Breast epithelium (tissue), 4 donors: ENCODE measurements at regions of chr6 and their contacts with region 1.

Region 1: DNA sequence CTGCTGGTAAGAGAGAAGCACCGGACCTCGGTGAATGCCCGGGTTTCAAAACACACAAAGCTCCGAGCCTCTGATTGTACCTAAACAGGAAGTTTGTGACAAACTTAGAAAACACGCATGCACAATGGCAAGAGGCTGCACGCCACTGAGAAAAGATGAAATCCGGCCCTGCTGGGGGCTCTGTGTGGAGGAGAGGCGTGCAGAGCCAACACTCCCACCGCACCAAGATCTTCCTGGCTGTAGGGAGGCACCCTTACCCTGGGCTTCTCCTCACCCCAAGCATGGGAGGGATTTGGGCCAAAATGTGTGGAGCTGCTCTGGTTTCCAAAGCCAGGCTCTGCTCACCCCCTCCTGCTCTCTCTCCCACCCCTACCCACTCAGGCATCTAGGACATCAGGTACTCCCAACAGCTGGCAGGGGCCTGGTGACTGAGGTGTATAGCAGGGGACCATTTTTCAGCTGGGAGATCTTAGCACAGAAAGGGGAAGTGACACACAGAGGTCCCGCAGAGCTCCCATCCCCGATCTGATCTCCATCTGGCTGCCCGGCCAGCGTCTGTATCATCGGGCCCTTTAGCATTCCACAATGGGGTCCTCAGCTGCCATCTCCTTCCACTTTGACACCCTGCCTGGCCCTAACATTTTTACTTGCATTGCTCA is 84.2 kb downstream of the TRERF1 start:
- DNase-seq: no peak
- H3K4me3 ChIP-seq: no peak overlapping the region
- H3K27ac ChIP-seq: peak overlapping the region in 1 of 2 donors; percentile 5
- H3K4me1 ChIP-seq: no peaks in the 10 kb centered on the region
- H3K27me3 ChIP-seq: no peaks in the 10 kb centered on the region
- CTCF ChIP-seq: no peak
- POLR2A ChIP-seq: no peak

Region 2: DNA sequence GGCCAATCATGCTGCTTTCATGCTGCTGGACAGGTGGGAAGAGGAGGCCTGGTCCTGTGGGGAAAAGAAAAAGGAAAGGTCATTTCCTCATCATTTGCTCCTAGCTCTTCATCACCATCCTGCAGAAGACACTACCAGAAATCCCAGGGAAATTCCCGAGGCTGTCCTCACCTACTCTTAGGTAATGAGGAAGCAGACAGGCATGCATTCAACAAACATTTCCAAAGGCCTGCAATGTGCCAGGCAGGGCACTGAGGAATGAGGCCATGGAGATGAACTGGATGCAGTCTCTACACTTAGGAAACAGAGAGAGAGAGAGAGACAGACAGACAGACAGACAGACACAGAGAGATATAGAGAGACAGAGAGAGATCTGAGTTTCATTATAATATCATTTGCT is 66.8 kb before region 1 on chr6:
- intact Hi-C with region 1: loop called (anchors 2 kb)
- DNase-seq: no peak
- H3K4me3 ChIP-seq: no peak overlapping the region
- H3K27ac ChIP-seq: no peak overlapping the region
- H3K4me1 ChIP-seq: peaks cover 0 to 5% of the 10 kb centered on the region in 2 donors
- H3K27me3 ChIP-seq: no peaks in the 10 kb centered on the region
- CTCF ChIP-seq: no peak
- POLR2A ChIP-seq: no peak

Region 3: DNA sequence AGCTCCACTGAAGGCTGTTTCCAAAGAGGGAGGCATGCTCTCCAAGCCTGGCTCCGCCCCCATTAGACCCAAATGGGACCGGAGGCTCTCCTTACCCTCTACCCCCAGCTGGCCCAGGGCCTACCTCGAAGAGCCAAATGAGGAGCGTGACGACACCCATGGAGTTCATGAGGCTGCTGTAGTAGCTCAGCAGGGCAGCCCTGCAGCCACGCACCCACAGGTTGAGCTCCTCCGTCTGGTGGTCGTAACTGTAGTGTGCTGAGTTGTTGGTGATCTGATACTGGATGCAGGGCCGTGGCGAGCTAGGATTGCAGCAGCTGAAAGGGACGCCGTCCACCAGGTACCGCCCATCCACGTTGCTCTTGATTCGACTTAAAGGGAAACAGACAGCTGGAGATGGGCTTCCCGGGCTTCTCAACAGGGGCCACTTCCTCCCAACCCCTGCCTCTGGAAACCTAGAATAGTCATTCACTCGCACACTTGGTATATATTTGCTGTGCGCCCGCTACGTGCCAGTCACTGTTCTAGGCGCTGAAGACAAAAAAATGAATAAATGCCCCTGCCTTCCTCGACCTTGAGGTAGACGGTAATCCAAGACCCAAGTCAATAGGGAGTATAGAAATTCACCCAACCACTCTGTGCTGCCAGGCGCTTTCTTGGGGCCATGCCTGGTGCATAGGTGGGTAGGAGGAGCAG is 336.9 kb after region 1 on chr6:
- intact Hi-C with region 1: no loop called
- DNase-seq: no peak
- H3K4me3 ChIP-seq: peak overlapping the region in 2 of 3 donors; percentile 44 to 62
- H3K27ac ChIP-seq: no peak overlapping the region
- H3K4me1 ChIP-seq: no peaks in the 10 kb centered on the region
- H3K27me3 ChIP-seq: no peaks in the 10 kb centered on the region
- CTCF ChIP-seq: no peak
- POLR2A ChIP-seq: no peak

Region 4: DNA sequence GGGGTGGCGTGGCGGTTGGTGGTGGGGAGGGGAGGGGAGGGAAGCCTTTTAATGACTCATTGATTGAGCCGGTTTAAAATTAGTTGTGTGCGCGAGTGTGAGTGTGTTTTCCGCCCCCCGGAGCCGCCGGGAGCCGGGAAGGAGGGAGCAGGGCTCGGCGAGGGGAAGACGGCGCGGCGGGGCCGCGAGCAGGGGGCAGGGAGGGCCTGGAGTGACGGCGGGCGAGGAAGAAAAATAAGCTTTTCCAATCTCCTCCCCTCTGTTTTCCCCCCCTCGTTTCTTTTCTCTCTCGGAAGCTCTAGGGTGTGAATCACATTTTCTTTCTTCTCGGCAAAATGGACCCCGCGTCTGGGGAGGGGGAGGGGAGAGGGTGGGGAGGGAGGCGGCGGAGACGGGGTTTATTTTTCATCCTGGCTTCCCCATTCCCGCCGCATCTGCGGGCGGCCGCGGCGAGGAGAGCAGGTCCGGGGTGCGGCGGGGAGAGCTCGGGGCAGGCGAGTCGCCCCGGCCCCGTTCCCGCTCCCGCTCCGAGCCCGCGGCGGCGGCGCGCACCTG is 415.2 kb after region 1 on chr6:
- intact Hi-C with region 1: no loop called
- DNase-seq: peak; percentile 69 to 73
- H3K4me3 ChIP-seq: peak overlapping the region; percentile 85 to 92 (median 86)
- H3K27ac ChIP-seq: peak overlapping the region; percentile 99 to 100
- H3K4me1 ChIP-seq: no peaks in the 10 kb centered on the region
- H3K27me3 ChIP-seq: no peaks in the 10 kb centered on the region
- CTCF ChIP-seq: no peak
- POLR2A ChIP-seq: peak; percentile 87

Region 5: GRCh38 chr6:43347021-43347420 is 979.5 kb after region 1 on chr6:
- intact Hi-C with region 1: no loop called
- DNase-seq: no peak
- H3K4me3 ChIP-seq: no peak overlapping the region
- H3K27ac ChIP-seq: no peak overlapping the region
- H3K4me1 ChIP-seq: no peaks in the 10 kb centered on the region
- H3K27me3 ChIP-seq: no peaks in the 10 kb centered on the region
- CTCF ChIP-seq: no peak
- POLR2A ChIP-seq: no peak